ENCODE measurements at regions of chr12 and their contacts with region 1.

Region 1: GRCh38 chr12:34126239-34126641 is 103.9 kb downstream of the ALG10 start:
- DNase-seq: peak in 1 of 3 donors; percentile 15
- H3K4me3 ChIP-seq: peak overlapping the region; percentile 43 to 67 (median 64)
- H3K4me3 Mint-ChIP-seq: peak overlapping the region; percentile 72 to 87
- H3K27ac ChIP-seq: peak overlapping the region in 1 of 2 donors; percentile 69
- H3K27ac Mint-ChIP-seq: peak overlapping the region in 5 of 7 donors; percentile 8 to 80 (median 52)
- H3K4me1 ChIP-seq: peaks cover 8 to 9% of the 10 kb centered on the region in 2 donors
- H3K4me1 Mint-ChIP-seq: peaks cover 14% of the 10 kb centered on the region
- H3K27me3 ChIP-seq: no peaks in the 10 kb centered on the region
- H3K27me3 Mint-ChIP-seq: peaks cover 0 to 2% (median 2%) of the 10 kb centered on the region in 3 donors
- CTCF ChIP-seq: no peak

Region 2: DNA sequence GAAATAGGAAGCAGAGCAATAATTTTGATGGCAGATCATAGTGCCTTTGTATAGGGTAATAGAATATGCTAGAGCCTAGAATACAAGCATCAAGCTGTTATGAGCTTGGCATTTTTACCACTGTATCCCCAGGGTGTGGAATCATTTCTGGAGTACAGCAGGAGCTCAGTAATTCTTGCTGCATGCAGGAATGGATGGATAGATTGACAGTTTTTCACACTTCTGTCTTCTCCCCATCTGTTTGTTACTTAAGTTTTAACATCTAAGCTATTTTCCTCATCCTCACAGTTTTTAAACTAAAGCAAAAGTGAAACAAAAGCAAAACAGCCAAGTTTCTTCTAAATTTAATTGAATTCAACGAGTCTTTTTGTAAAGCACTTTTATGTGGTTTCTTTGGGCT is 71.3 kb before region 1 on chr12:
- intact Hi-C with region 1: no loop called
- DNase-seq: no peak
- H3K4me3 ChIP-seq: no peak overlapping the region
- H3K4me3 Mint-ChIP-seq: no peak overlapping the region
- H3K27ac ChIP-seq: no peak overlapping the region
- H3K27ac Mint-ChIP-seq: no peak overlapping the region
- H3K4me1 ChIP-seq: no peaks in the 10 kb centered on the region
- H3K4me1 Mint-ChIP-seq: no peaks in the 10 kb centered on the region
- H3K27me3 ChIP-seq: no peaks in the 10 kb centered on the region
- H3K27me3 Mint-ChIP-seq: peaks cover 0 to 3% (median 0%) of the 10 kb centered on the region in 3 donors
- CTCF ChIP-seq: no peak

Region 3: GRCh38 chr12:34218165-34219045 is 92.2 kb after region 1 on chr12:
- intact Hi-C with region 1: loop called (anchors 5 to 10 kb)
- DNase-seq: peak; percentile 27 to 61 (median 55)
- H3K4me3 ChIP-seq: peak overlapping the region; percentile 1 to 63 (median 43)
- H3K4me3 Mint-ChIP-seq: peak overlapping the region; percentile 88 to 89
- H3K27ac ChIP-seq: no peak overlapping the region
- H3K27ac Mint-ChIP-seq: peak overlapping the region in 2 of 7 donors; percentile 15 to 36
- H3K4me1 ChIP-seq: peaks cover 7 to 8% of the 10 kb centered on the region in 2 donors
- H3K4me1 Mint-ChIP-seq: peaks cover 12% of the 10 kb centered on the region
- H3K27me3 ChIP-seq: peaks cover 0 to 9% of the 10 kb centered on the region in 2 donors
- H3K27me3 Mint-ChIP-seq: peaks cover 16 to 26% (median 19%) of the 10 kb centered on the region in 3 donors
- CTCF ChIP-seq: peak; percentile 93